ENCODE measurements at regions of chr1 and their contacts with region 1.

Region 1: GRCh38 chr1:23098463-23099170 is 70.0 kb downstream of the LUZP1 start:
- DNase-seq: peak; percentile 39
- H3K4me3 Mint-ChIP-seq: no peak overlapping the region
- H3K27ac Mint-ChIP-seq: no peak overlapping the region
- H3K4me1 Mint-ChIP-seq: peaks cover 41% of the 10 kb centered on the region
- H3K27me3 Mint-ChIP-seq: no peaks in the 10 kb centered on the region
- CTCF ChIP-seq: peak; percentile 73

Region 2: DNA sequence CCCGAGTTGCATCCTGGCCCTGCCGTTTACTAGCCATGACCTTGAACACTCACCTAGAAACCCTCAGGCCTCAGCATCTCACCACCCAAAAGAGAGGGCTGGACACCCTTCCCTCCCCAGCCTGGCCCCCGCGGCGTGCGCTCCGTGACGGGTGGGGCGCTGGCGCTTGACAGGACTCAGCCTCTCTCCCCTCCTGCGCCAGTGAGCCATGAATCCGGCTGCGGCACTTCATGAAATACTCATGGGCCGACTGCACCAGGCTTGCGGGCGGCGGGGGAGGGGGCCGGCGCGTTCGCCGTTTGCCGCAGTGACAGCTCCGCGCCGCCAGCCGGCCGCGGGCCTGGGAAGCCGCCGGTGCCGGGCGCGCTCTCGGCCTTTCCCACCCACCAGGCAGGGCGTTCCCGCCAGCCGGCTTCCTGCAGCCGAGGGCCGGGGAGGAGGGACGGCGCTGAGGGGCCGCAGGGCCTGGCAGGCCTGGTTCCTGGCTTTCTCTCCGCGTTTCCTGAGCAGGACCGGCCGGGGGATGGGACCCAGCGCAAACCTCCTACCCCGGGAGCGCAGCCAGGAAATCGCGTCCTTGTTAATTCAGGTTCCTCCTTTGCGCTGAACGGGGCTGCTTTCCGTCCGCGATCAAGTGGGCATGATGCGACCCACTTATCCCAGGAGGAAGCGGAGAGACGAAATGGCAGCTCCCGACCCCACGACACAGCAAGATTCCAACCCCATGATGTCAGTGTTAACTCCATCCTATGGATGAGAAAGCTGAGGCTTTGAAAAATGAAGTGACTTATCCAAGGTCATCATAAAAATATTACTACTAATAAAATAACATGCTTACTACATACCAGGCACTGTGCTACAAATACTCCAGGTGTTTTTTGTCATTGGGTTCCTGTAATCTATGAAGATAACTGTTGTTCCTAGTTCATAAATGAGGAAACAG is 79.1 kb after region 1 on chr1:
- CTCF ChIA-PET with region 1: interaction called, 54 read pairs
- intact Hi-C with region 1: loop called (anchors 2 kb)
- DNase-seq: peak; percentile 58
- H3K4me3 Mint-ChIP-seq: peak overlapping the region; percentile 62
- H3K27ac Mint-ChIP-seq: no peak overlapping the region
- H3K4me1 Mint-ChIP-seq: no peaks in the 10 kb centered on the region
- H3K27me3 Mint-ChIP-seq: no peaks in the 10 kb centered on the region
- CTCF ChIP-seq: no peak

Region 3: GRCh38 chr1:23184212-23184934 is 85.8 kb after region 1 on chr1:
- CTCF ChIA-PET with region 1: interaction called, 54 read pairs
- intact Hi-C with region 1: loop called (anchors 1 kb)
- DNase-seq: peak; percentile 27
- H3K4me3 Mint-ChIP-seq: peak overlapping the region; percentile 41
- H3K27ac Mint-ChIP-seq: no peak overlapping the region
- H3K4me1 Mint-ChIP-seq: peaks cover 11% of the 10 kb centered on the region
- H3K27me3 Mint-ChIP-seq: no peaks in the 10 kb centered on the region
- CTCF ChIP-seq: peak; percentile 64